B cell (primary cell): ENCODE measurements at regions of chr1 and their contacts with region 1.

Region 1: DNA sequence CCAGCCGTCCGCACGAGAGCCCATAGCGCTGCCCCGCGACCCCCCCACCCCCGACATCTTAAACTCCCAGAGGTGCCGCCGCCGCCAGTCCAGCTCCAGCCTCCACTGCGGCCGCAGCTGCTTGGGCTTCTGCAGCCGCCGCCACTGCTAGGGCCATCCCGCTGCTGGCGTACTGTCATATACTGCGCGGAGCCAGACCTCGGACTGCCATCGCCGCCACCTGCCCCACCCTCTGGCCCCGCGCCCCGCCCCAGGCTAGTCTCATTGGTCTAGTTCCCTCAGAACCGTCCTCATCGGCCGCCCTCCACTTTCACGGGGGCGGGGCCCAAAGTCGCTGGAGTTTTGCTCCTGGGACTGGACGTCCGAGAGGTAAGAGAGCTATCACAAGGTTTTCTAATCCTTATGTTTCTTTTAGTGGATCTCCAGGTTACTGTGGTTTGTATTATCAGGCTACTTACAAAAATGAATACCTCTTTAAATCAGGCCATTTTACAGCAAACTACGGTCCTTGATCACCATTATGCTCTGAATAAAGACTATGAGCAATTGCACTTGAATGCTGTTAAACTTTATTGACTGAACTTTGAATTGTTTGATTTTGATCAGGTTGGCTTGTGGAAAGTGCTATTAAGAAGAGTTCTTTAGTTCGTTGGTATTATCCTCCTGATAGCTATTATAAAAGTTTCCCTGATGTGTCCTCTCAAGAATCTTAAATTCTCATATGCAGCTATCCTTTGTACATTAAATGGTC is 2.8 kb upstream of the CD1D start:
- DNase-seq: peak; percentile 65
- ATAC-seq: peak; percentile 69
- H3K4me3 ChIP-seq: peak overlapping the region; percentile 39 to 62 (median 50)
- H3K4me3 Mint-ChIP-seq: peak overlapping the region; percentile 82
- H3K27ac ChIP-seq: peak overlapping the region; percentile 22 to 53
- H3K27ac Mint-ChIP-seq: peak overlapping the region; percentile 86
- H3K4me1 ChIP-seq: peaks cover 58 to 72% of the 10 kb centered on the region in 2 donors
- H3K4me1 Mint-ChIP-seq: peaks cover 73% of the 10 kb centered on the region
- H3K27me3 ChIP-seq: no peaks in the 10 kb centered on the region
- H3K27me3 Mint-ChIP-seq: no peaks in the 10 kb centered on the region
- CTCF ChIP-seq: no peak

Region 2: DNA sequence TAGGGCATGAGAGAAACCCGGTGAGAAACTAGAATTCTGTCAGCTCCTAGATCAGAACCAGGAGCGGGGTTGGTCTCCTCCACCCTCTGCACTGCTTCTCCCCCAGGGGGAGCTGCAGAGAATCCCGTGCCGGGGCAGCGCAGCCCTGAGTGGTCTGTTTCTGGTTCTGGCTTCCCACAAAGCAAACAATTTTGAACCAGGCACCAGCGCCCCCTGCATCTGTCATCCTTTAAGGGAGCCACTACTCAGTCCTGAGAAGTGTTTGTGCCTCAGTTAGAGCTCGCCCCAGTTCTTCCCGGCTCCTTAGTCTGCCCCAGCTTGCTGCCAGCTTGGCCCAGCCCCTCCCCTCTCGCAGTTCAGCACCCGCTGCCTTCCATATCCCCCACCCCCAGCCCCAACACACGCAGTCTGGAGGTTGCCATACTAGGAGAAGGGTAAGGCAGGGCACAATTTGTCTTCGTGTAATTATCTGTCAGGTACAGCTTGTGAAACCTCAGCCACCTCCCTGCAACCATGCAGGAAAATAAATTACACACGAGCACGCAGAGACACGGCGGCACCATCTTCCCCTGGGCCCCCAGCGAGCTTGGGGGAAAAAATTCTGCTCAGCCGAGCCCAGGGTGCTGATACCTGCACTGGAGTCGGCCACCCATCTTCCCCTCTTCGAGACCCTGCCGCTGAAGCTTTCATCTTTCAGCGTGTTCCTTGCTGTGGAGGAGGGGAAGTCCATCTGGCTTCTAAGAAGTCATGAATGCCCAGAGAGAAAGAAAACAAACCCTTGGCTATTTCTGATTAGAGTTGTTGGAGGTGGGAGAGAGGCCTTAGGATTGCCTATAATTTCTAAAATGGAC is 59.8 kb before region 1 on chr1:
- CTCF ChIA-PET with region 1: interaction called, 61 read pairs
- POLR2A ChIA-PET with region 1: no interaction called
- intact Hi-C with region 1: no loop called
- DNase-seq: peak; percentile 76
- ATAC-seq: peak; percentile 58
- H3K4me3 ChIP-seq: peak overlapping the region in 3 of 5 experiments; percentile 15 to 44 (median 32)
- H3K4me3 Mint-ChIP-seq: peak overlapping the region; percentile 77
- H3K27ac ChIP-seq: no peak overlapping the region
- H3K27ac Mint-ChIP-seq: no peak overlapping the region
- H3K4me1 ChIP-seq: peaks cover 22 to 32% of the 10 kb centered on the region in 2 donors
- H3K4me1 Mint-ChIP-seq: peaks cover 28% of the 10 kb centered on the region
- H3K27me3 ChIP-seq: peaks cover 0 to 38% (median 16%) of the 10 kb centered on the region in 4 experiments
- H3K27me3 Mint-ChIP-seq: peaks cover 35% of the 10 kb centered on the region
- CTCF ChIP-seq: peak; percentile 85

Region 3: DNA sequence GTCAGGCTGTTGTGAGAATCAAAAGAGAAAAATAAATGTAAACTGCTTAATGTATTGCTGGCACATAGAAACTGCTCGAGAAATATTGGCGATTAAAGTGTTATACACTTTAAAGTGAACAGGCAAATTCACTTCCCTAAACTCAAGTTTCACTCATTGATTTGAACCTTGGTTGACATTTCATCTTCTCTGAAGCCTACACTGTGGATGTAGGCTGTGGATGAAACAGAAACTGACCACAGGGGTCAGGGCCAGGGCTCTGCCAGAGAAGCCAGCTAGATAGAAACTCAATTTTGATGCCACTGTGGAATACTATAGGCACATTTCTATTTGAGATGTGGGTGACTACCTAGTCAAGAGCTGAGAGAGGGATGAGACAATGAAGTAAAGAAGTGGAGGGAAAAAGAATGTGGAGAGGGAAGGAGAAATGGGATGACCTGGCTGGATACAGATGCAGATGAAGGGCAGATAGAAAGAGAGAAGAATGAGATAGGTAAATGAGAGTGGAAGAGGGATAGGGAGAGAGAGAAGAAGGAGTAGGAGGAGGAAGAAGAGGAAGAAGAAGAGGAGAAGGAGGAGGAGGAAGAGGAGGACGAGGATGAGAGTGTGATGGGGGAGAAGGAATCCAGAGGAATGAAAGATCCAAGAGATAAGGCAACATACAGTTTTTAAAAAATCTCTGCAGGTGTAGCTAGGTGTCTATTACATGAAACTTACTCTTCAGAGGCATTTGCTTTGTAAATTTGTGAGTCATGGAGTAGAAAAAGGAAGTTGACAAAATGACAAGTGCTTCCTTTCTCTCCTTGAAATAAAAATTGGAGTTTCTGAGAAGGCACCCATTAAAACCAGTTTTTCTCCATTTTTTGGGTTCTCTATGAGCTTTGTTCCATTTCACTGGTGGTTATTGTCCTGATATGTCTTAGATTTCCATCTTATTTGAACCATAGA is 14.6 kb before region 1 on chr1:
- CTCF ChIA-PET with region 1: interaction called, 8 read pairs
- POLR2A ChIA-PET with region 1: interaction called, 3 read pairs
- intact Hi-C with region 1: loop called (anchors 1 kb)
- DNase-seq: peak; percentile 42
- ATAC-seq: peak; percentile 92
- H3K4me3 ChIP-seq: peak overlapping the region in 2 of 5 experiments; percentile 3 to 32
- H3K4me3 Mint-ChIP-seq: peak overlapping the region; percentile 78
- H3K27ac ChIP-seq: peak overlapping the region in 1 of 2 donors; percentile 21
- H3K27ac Mint-ChIP-seq: peak overlapping the region; percentile 68
- H3K4me1 ChIP-seq: peaks cover 33 to 40% of the 10 kb centered on the region in 2 donors
- H3K4me1 Mint-ChIP-seq: peaks cover 35% of the 10 kb centered on the region
- H3K27me3 ChIP-seq: no peaks in the 10 kb centered on the region
- H3K27me3 Mint-ChIP-seq: no peaks in the 10 kb centered on the region
- CTCF ChIP-seq: peak; percentile 23

Region 4: GRCh38 chr1:158285756-158286241 is 107.9 kb after region 1 on chr1:
- CTCF ChIA-PET with region 1: no interaction called
- POLR2A ChIA-PET with region 1: no interaction called
- intact Hi-C with region 1: loop called (anchors 2 kb)
- DNase-seq: peak; percentile 91
- ATAC-seq: peak; percentile 77
- H3K4me3 ChIP-seq: peak overlapping the region; percentile 3 to 59 (median 30)
- H3K4me3 Mint-ChIP-seq: peak overlapping the region; percentile 86
- H3K27ac ChIP-seq: peak overlapping the region; percentile 75 to 79
- H3K27ac Mint-ChIP-seq: peak overlapping the region; percentile 94
- H3K4me1 ChIP-seq: peaks cover 80 to 93% of the 10 kb centered on the region in 2 donors
- H3K4me1 Mint-ChIP-seq: peaks cover 72% of the 10 kb centered on the region
- H3K27me3 ChIP-seq: no peaks in the 10 kb centered on the region
- H3K27me3 Mint-ChIP-seq: no peaks in the 10 kb centered on the region
- CTCF ChIP-seq: no peak

Region 5: DNA sequence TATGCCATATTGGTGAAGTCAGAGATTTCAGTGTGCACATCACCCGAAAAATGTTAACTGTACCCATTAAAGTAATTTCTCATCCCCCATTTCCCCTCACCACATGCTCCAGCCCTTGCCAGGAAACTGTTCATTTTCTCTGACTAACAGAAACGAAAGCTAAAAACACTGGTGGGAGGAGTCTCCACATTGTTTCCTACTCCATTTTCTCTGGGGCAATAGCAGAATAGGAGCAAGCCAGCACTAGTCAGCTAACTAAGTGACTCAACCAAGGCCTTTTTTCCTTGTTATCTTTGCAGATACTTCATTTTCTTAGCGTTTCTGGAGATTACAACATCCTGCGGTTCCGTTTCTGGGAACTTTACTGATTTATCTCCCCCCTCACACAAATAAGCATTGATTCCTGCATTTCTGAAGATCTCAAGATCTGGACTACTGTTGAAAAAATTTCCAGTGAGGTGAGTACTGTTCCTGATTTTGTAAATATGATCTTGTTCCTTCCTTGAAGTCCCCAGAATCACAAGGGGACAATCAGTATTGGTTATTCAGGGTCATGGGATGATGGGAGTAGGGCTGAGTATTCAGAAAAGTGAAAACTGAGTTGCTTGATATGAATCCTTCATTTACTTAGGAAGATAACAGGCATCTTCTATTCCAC is 832.0 kb after region 1 on chr1 and contains the start of gene IFI16:
- CTCF ChIA-PET with region 1: no interaction called
- POLR2A ChIA-PET with region 1: no interaction called
- intact Hi-C with region 1: loop called (anchors 5 kb)
- DNase-seq: peak; percentile 71
- ATAC-seq: peak; percentile 70
- H3K4me3 ChIP-seq: peak within 1 kb of the TSS; percentile 71 to 100 (median 91)
- H3K4me3 Mint-ChIP-seq: peak within 1 kb of the TSS; percentile 98
- H3K27ac ChIP-seq: peak within 1 kb of the TSS; percentile 66 to 88
- H3K27ac Mint-ChIP-seq: peak within 1 kb of the TSS; percentile 94
- H3K4me1 ChIP-seq: peaks cover 56 to 59% of the 10 kb centered on the region in 2 donors
- H3K4me1 Mint-ChIP-seq: peaks cover 67% of the 10 kb centered on the region
- H3K27me3 ChIP-seq: no peaks in the 10 kb centered on the region
- H3K27me3 Mint-ChIP-seq: no peaks in the 10 kb centered on the region
- CTCF ChIP-seq: no peak
- total RNA-seq, gene IFI16: 150 and 176 TPM in 2 replicates